Left cardiac atrium (tissue), 4 donors: ENCODE measurements at regions of chr6 and their contacts with region 1.

Region 1: GRCh38 chr6:122913558-122913957 is 82.5 kb upstream of the CLVS2 start:
- DNase-seq: no peak
- ATAC-seq: no peak

Region 2: GRCh38 chr6:122953766-122954165 is 40.2 kb after region 1 on chr6:
- intact Hi-C with region 1: loop called in 1 of 2 experiments (anchors 2 kb)
- DNase-seq: no peak
- ATAC-seq: no peak

Region 3: DNA sequence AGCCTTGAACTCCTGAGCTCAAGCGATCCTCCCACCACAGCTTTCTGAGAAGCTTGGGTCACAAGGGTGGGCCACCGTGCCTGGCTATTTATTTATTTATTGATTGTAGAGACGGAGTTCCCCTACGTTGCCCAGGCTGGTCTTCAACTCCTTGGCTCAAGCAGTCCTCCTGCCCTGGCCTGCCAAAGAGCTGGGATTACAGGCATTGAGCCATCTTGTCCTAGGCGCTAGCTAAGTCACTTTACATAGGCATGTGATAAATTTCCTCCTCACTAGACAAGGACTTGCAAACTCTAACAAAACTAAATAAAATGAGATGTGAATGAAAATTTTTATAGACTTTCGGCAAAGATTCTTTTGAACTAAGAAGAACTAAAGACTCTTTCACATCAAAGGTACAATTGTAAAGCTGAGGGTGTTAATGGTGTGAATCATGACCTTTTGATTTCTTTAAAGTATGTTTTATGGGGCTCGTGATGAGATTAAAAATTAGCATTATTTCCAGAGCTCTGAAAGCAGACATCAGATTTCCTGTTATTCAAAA is 294.5 kb after region 1 on chr6:
- intact Hi-C with region 1: no loop called
- DNase-seq: no peak
- ATAC-seq: no peak

Region 4: DNA sequence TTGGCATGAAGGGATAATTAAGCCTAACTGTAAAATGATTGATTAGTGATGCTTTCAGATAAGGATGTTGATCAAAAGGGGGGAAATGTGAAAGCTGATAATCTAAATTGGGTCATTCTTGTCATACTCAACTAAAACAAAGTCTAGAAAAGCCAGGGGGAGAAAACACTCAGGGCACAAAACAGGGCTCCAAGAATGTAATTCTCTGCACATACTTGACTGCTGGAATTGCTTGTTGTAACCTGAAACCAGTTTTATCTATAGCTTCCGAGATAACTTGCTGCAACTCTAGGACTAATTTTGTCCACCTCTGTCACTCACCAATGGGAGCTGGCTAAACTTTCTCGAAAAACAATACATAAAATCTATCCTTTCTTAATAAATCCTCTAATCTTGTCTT is 392.8 kb after region 1 on chr6:
- intact Hi-C with region 1: no loop called
- DNase-seq: no peak
- ATAC-seq: peak; percentile 43 to 73